ENCODE measurements at regions of chr2 and their contacts with region 1.

Region 1: GRCh38 chr2:111715987-111716904 is 167.7 kb downstream of the ANAPC1 start:
- DNase-seq: no peak
- ATAC-seq: peak; percentile 72 to 79

Region 2: DNA sequence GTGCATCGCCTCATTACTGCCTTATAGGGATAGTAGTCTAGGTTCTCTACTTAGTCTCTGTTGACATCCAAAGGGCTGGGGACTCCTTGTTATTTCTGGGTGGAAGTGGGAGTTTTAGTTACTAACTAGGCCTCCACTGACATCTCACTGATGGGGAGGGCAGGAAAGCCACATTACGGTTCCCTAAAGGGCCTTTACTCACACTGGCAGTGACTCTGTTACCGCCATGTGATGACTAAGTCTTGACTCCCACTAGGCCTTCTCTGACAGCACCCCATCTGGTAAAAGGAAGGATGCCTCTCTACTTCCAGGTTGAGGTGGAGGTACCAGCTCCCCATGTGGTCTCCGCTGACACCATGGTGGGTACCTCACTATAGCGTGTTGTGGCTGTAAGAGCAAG is 609.5 kb before region 1 on chr2:
- intact Hi-C with region 1: loop called in 1 of 2 experiments (anchors 5 kb)
- DNase-seq: no peak
- ATAC-seq: no peak

Measured in left cardiac atrium (tissue), 4 donors.